ENCODE measurements at regions of chr1 and their contacts with region 1.

Region 1: DNA sequence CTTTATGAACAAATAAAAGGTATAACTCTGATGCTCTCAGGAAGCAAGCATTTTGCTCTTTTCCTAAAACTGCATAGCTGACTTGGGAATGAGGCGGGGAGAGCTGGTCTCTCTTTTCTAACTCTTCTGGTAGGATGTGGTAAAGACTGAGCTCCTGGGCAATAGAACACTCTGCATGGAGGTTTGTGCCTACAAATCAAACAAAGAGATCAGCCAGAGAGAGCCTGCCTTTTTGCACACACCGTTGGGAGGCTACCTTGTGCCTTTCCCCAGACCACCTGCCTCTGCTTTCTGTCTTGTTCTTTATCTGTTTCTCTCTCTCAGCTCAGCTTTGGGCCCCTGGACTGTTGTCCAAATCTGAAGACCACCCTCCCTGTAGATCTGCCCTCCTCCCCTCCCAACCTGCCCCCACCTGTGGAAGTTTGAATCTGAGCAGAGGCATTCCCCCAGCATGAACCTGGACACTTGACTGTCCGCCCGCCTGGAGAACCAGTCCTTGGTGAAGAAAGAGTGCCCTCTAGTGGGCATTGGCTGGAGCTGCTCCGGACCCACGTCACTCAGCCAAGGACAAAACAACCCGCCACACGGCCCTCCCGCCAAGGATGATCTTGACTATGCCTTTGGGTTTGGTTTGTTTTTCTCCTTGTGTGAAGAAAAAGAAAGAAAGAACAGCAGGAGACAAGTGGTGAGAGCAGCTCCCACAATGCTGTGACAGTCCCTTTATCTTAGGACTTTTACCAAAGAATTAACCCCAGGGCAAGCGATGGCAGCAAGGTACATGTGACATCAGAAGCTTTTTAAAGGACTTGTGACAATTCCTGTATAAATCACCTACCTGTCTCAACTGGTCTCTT is 228.2 kb downstream of the PBX1 start:
- DNase-seq: peak in 1 of 2 donors; percentile 88
- H3K4me3 ChIP-seq: no peak overlapping the region
- H3K27ac ChIP-seq: no peak overlapping the region
- H3K4me1 ChIP-seq: peaks cover 0 to 38% of the 10 kb centered on the region in 2 donors
- H3K27me3 ChIP-seq: no peaks in the 10 kb centered on the region
- CTCF ChIP-seq: peak; percentile 82 to 96 (median 93)

Region 2: GRCh38 chr1:164440232-164440631 is 347.0 kb before region 1 on chr1:
- intact Hi-C with region 1: loop called (anchors 5 kb)
- DNase-seq: peak in 1 of 2 donors; percentile 59
- H3K4me3 ChIP-seq: no peak overlapping the region
- H3K27ac ChIP-seq: peak overlapping the region in 1 of 2 donors; percentile 28
- H3K4me1 ChIP-seq: peaks cover 0 to 5% of the 10 kb centered on the region in 2 donors
- H3K27me3 ChIP-seq: no peaks in the 10 kb centered on the region
- CTCF ChIP-seq: peak; percentile 11 to 41 (median 33)

Region 3: GRCh38 chr1:164558461-164559341 is 228.5 kb before region 1 on chr1 and contains the start of gene PBX1:
- intact Hi-C with region 1: loop called (anchors 5 kb)
- DNase-seq: peak; percentile 95 to 99
- H3K4me3 ChIP-seq: peak within 1 kb of the TSS; percentile 69 to 82
- H3K27ac ChIP-seq: peak within 1 kb of the TSS; percentile 79 to 84
- H3K4me1 ChIP-seq: no peaks in the 10 kb centered on the region
- H3K27me3 ChIP-seq: no peaks in the 10 kb centered on the region
- CTCF ChIP-seq: no peak
- total RNA-seq, gene PBX1: 37.4 TPM

Region 4: DNA sequence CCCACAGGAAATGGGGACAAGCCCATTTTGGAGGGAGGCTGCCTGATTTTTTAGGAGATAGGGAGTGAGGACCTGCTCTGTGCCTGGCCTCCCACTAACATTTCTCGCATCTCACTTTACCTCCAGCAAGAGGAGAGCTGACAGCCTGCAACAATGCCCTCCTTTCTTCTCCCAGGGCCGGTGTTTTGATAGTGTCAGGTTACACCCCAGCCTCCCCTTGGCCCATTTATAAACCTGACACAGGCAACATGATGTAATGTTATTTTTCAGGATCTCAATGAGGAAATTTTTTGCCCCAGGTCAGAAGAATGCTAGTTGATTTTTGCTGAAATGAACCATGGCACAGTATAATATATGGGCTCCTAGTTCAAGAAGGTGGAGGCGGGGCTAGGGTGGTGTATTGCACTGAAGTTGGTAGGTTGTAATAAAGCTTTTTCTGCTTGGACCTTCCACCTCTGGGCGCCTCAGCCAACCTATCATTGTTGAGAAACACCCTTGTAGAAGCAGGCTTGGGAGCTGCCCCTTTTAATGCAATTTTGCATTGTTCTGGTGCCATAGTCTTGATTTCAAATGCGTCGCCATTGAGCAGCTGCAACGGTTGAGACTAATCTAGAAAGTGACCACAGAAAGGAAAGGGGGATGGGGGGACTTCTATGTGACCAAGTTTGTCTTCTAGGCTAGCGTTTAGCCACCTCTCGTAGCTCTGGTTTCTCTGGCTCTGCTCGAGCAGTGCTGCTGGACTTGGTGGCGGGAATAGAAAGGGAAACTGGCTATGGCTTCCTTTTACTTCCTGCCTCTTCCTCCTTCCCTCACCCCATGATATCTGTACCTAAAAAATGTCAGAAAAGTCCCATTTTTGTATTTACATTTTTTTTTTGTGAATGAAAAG is 175.2 kb before region 1 on chr1:
- intact Hi-C with region 1: loop called (anchors 5 kb)
- DNase-seq: peak in 1 of 2 donors; percentile 71
- H3K4me3 ChIP-seq: peak overlapping the region in 1 of 2 donors; percentile 53
- H3K27ac ChIP-seq: peak overlapping the region; percentile 82 to 83
- H3K4me1 ChIP-seq: peaks cover 8 to 49% of the 10 kb centered on the region in 2 donors
- H3K27me3 ChIP-seq: no peaks in the 10 kb centered on the region
- CTCF ChIP-seq: no peak

Region 5: DNA sequence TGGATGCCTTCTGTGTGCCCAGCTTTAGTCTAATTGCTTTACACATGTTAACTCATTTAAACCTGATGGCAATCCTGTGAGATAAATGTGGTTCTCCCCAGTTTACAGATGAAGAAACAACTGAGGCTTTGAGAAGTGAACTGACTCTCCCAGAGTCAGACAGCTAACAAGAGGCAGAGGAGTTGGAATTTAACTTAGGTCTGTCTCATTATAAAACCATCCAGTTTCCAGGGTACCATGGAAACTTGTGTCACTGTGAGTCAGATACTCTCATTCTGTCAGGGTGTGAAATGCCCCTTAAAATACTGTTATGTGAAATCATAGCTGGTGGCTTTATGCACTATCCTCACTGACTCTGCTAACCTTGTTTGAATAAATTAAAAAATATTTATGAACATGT is 21.6 kb before region 1 on chr1:
- intact Hi-C with region 1: loop called (anchors 2 kb)
- DNase-seq: no peak
- H3K4me3 ChIP-seq: no peak overlapping the region
- H3K27ac ChIP-seq: peak overlapping the region; percentile 74 to 82
- H3K4me1 ChIP-seq: peaks cover 0 to 30% of the 10 kb centered on the region in 2 donors
- H3K27me3 ChIP-seq: no peaks in the 10 kb centered on the region
- CTCF ChIP-seq: no peak

Measured in ascending aorta (tissue), 2 donors.